ENCODE measurements at regions of chr11 and their contacts with region 1.

Region 1: DNA sequence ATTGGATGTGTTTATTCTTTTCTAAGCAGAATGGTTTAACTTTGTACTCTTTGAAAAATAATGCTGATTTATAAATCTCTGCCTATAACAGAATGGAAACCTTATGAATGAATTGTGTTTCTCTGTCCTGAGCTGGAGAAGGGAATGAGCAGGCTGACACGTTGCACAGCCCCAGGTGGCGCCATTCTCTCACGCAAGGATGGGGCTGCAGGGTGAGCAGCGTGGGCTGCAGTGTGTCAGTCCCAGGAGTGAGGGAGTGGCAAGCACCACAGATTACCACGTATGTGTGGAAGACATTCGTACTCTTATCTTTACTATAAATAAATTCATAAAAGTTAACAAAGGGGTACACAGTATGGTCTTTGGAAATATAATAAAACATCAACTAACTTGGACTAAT is 33.4 kb downstream of the FDX1 start:
- DNase-seq: peak in 4 of 5 donors; percentile 34 to 57 (median 50)
- H3K4me3 ChIP-seq: no peak overlapping the region
- H3K27ac ChIP-seq: no peak overlapping the region
- H3K4me1 ChIP-seq: no peaks in the 10 kb centered on the region
- H3K27me3 ChIP-seq: no peaks in the 10 kb centered on the region
- CTCF ChIP-seq: peak; percentile 28

Region 2: GRCh38 chr11:111229604-111230003 is 766.5 kb after region 1 on chr11:
- intact Hi-C with region 1: loop called (anchors 10 kb)
- DNase-seq: no peak
- H3K4me3 ChIP-seq: no peak overlapping the region
- H3K27ac ChIP-seq: no peak overlapping the region
- H3K4me1 ChIP-seq: peaks cover 0 to 3% (median 0%) of the 10 kb centered on the region in 3 donors
- H3K27me3 ChIP-seq: no peaks in the 10 kb centered on the region
- CTCF ChIP-seq: no peak